Thyroid gland (tissue), 4 donors: ENCODE measurements at regions of chr18 and their contacts with region 1.

Region 1: DNA sequence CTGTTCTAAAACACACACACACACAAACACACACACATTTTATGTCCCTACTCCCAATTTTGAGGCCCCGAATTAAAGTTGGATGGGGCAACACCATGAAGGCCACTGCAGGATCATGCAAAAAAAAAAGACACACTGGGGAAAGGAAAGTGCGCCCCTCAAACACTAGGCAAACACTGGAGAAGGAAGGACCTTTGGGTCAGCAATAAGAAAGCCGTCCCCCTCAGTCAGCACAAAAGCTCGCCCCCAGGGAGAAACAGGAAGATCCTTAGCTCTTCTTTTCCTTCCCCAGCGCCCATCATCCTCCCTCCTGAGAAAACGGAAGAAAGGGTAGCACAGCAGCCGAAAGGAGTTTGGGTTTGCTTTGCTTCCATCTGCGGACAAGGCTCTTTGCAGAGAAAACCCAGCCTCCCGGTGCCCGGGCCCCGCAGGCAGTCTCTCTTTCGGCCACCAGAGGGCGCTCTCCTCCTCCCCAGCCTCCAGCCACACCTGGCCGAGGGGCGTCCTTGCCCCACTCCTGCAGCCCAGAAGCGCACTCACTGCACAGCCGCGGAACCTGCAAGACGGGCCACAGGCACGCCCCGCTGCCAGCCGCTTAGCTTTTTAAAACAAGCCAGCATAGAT is 248.5 kb downstream of the CDH20 start:
- DNase-seq: peak; percentile 80 to 83
- H3K4me3 ChIP-seq: peak overlapping the region in 1 of 3 donors; percentile 27
- H3K27ac ChIP-seq: peak overlapping the region in 2 of 3 donors; percentile 44 to 48
- H3K4me1 ChIP-seq: peaks cover 3 to 15% of the 10 kb centered on the region in 2 donors
- H3K27me3 ChIP-seq: no peaks in the 10 kb centered on the region
- CTCF ChIP-seq: peak; percentile 89 to 99 (median 96)
- POLR2A ChIP-seq: no peak

Region 2: DNA sequence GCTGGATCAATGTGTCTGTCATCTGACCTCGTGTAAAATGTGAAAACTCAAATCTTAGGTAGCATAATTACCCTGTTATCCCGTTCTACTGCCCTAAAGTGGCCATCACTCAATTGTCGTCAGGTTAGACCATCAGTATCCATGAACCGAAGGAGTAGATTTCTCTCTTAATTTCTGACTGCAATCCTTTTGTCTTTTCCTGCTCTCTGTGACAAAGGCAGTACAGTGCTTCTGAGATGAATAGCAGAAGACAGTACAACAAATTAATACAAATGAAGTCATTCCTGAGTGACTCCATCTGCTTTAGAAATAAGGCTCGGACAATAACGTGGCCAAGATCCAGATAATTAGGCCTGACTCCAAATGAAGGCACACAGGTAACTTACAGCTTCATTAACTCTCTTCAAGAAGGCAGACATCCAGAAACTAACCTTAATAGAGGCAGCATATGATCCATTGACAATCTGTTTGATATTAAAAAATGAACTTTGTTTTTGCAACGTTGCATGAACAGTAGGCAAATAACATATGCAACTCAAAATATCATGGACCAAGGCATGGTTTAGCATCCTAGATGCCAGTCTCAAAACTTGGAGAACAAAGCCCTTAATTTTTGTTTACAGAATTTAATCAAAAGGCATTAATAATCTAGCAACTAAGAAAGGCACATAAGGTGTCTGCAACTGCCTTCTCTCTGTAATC is 345.2 kb before region 1 on chr18:
- intact Hi-C with region 1: no loop called
- DNase-seq: no peak
- H3K4me3 ChIP-seq: no peak overlapping the region
- H3K27ac ChIP-seq: no peak overlapping the region
- H3K4me1 ChIP-seq: no peaks in the 10 kb centered on the region
- H3K27me3 ChIP-seq: no peaks in the 10 kb centered on the region
- CTCF ChIP-seq: no peak
- POLR2A ChIP-seq: no peak

Region 3: GRCh38 chr18:61635901-61636528 is 54.3 kb after region 1 on chr18:
- intact Hi-C with region 1: loop called (anchors 10 kb)
- DNase-seq: peak; percentile 66 to 68
- H3K4me3 ChIP-seq: no peak overlapping the region
- H3K27ac ChIP-seq: peak overlapping the region; percentile 3 to 69 (median 68)
- H3K4me1 ChIP-seq: peaks cover 31 to 32% of the 10 kb centered on the region in 2 donors
- H3K27me3 ChIP-seq: no peaks in the 10 kb centered on the region
- CTCF ChIP-seq: peak; percentile 59 to 95 (median 73)
- POLR2A ChIP-seq: no peak

Region 4: DNA sequence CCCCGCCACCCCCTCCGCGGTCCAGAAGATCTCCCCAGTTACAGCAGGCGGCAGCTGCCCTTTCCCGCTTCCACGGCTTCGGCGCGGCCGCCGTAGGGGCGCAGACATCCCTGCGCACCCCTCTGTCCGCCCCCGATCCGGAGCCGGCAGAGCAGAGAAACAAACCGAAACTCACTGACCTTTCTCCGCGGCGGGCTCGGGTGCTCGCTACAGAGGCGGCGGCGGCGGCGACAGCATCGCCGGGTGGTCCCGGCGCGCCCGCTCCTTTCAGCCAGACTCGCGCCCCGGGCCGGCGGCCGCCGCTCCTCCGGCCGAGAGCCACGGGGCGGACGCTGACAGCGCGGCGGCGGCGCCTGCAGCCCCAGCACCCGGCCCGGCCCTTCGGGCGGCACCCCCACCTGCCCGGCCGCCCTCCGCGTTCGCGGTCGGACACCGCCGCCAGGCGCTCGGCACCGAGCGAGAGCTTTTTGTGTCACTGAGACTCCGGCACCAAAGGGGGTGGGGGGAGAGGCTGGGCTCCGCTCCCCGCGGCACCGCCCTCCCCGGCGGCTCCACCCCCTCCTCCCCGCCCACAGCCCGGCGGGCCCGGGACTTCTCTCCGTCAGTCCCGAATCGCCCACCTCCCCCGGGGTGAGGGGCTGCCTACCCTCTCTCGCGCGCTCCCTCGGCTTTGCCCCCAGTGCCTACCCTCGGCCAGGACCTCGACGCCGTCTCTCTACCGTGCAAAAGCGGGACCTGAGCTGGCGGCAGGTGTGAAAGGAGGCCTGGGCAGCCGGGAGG is 312.5 kb after region 1 on chr18:
- intact Hi-C with region 1: loop called (anchors 5 kb)
- DNase-seq: peak; percentile 80 to 85
- H3K4me3 ChIP-seq: peak overlapping the region; percentile 72 to 82 (median 73)
- H3K27ac ChIP-seq: peak overlapping the region; percentile 76 to 88 (median 80)
- H3K4me1 ChIP-seq: peaks cover 0 to 13% of the 10 kb centered on the region in 2 donors
- H3K27me3 ChIP-seq: no peaks in the 10 kb centered on the region
- CTCF ChIP-seq: peak in 3 of 6 experiments; percentile 34 to 77 (median 51)
- POLR2A ChIP-seq: peak in 1 of 2 donors; percentile 82